AG04449 (cell line): ENCODE measurements at regions of chr11 and their contacts with region 1.

Region 1: DNA sequence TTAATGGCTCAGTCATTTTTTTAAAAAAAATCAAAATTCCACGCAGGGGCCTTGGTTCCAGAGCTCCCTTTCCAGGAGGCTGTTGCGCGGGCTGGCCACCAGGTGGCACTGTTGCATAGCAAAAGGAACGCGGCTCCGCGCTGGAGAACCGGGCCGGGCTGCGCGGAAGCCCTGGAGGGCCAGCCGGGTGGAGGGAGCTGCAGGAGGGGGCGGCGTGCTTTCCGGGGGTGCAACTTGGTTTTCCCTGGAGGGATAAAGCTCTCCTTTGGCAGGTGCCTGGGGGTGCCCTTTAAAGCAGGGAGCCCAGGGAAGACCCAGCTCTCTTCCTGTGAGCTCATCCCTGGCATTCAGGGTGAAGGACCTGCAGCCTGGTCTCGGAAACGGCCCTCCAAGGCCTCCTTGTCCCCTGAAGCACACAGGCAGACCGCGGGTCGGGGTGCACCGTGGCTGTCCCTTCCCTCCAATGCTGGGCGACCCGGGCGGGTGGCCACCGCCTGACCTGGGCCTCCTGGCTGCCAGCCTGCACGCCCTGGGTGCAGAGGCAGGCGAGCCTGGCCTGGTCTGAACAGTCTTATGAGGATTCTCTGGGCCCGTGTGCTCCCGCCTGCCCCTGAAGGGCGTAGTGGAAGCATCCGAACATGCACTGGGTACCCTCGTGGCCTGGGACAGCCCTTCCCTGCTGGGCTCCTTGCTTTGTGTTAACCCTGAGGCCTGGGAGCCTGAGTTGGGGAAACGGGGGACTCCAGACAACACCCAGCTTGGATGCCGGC is 23.4 kb downstream of the KRTAP5-5 start:
- DNase-seq: no peak
- H3K4me3 ChIP-seq: no peak overlapping the region
- CTCF ChIP-seq: peak; percentile 93

Region 2: DNA sequence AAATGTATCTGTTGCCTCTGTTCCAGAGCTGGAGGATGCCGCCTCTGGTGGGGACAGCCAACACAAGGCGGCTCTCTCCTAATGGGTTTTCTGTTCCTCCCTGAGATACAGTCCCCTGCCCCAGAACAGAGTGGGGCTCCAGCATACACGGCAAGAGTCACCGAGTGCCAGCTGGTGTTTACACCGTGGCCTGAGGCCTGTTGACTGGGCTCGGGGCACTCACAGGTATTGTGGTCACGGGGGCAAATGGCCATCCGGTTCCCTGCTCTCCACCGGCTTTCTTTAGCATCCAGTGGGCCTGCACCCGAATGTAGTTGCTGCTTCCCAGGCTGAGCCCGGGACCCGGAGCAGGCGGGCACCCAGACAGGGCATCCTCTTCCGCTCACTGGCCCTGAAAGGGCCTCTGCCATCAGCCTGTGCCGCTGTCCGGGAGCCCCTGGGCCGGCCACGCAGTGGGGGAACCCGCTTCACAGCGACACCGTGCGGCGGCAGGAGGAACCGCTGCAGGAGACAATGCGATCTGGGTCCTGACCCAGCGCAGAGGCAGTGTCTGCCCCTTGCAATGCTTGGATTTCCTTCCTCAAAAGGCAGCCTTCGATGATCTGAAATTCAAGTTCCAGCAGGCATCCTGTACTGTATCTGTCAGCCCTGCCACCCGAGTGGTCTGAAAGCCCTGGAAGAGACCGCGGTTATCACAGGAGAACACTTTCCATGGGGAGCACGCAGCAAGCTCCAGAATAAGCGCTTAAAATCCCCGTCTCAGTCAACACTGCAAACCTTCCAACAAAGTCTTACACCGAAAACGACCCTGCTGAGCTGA is 24.2 kb before region 1 on chr11:
- CTCF ChIA-PET with region 1: interaction called, 56 read pairs
- POLR2A ChIA-PET with region 1: no interaction called
- DNase-seq: no peak
- H3K4me3 ChIP-seq: no peak overlapping the region
- CTCF ChIP-seq: peak; percentile 95

Region 3: GRCh38 chr11:1682225-1682905 is 29.4 kb after region 1 on chr11:
- CTCF ChIA-PET with region 1: interaction called, 88 read pairs
- POLR2A ChIA-PET with region 1: no interaction called
- DNase-seq: no peak
- H3K4me3 ChIP-seq: no peak overlapping the region
- CTCF ChIP-seq: no peak

Region 4: GRCh38 chr11:1845561-1846452 is 192.9 kb after region 1 on chr11:
- CTCF ChIA-PET with region 1: interaction called, 11 read pairs
- POLR2A ChIA-PET with region 1: no interaction called
- DNase-seq: no peak
- H3K4me3 ChIP-seq: no peak overlapping the region
- CTCF ChIP-seq: no peak

Region 5: GRCh38 chr11:1953489-1954266 is 300.7 kb after region 1 on chr11:
- CTCF ChIA-PET with region 1: interaction called, 19 read pairs
- POLR2A ChIA-PET with region 1: interaction called, 3 read pairs
- DNase-seq: no peak
- H3K4me3 ChIP-seq: no peak overlapping the region
- CTCF ChIP-seq: no peak

Region 6: GRCh38 chr11:2036863-2037486 is 384.0 kb after region 1 on chr11:
- CTCF ChIA-PET with region 1: interaction called, 30 read pairs
- POLR2A ChIA-PET with region 1: no interaction called
- DNase-seq: no peak
- H3K4me3 ChIP-seq: no peak overlapping the region
- CTCF ChIP-seq: no peak